Posterior vena cava (tissue), 2 donors: ENCODE measurements at regions of chr17 and their contacts with region 1.

Region 1: DNA sequence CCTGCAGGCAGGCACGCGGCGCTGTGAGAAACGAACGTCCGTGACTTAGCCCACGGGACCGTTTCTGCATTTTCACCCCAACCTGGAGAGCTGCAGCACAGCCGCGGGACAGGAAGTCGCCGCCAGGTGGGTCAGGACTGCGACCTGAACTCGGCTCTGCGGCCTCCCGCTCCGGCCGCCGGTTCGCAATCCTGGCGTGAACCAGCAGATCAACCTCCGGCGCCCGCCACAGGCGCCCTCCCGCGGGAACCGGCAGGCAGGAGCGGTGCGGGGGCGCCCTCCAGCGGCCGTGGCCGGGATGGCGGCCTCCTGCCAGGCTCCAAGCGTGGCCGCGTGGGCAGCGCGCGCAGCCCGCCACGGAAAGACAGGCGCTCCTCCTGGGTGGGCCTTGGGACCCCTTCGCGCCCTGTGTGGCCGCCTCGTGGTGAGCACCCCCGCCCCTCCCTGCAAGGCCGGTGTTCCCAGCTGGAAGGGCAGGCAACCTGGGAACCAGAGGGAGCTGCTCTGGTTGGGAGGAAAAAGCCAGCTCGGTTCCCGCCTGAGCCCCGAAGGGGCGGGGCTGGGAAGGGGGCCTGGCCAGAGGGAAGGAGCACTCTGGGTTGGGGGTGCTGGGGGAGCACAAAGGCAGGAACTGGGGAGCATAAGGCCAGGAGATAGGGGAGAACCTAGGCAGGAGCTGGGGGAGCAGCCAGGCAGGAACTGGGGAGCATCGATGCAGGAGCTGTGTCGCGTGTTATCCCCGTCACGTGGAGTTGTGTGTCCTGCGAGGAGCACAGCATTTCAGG is 28.2 kb downstream of the ACTG1 start:
- DNase-seq: peak; percentile 97

Region 2: DNA sequence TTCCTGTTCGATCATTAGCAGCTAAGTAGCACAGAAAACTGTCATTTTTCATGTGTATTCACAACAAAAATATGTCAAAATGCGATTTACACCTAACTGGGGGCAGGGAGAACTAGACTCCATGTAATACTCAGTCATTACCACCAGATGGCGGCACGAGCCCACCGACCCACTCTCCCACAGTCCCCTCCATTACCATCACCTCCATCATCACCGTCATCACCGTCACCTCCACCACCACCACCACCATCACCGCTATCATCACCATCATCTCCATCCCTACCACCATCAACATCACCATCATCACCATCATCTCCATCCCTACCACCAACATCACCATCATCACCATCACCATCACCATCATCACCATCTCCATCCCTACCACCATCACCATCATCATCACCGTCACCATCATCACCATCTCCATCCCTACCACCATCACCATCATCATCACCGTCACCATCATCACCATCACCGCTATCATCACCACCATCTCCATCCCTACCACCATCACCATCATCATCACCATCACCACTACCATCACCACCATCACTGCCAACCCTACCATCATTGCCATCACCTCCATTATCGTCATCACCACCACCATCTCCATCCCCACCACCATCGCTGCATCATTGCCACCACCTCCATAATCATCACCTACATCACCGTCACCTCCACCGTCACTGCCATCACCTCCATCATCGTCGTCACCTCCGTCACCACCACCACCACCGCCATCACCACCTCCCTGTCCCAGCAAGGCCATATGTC is 230.8 kb before region 1 on chr17:
- intact Hi-C with region 1: loop called (anchors 5 kb)
- DNase-seq: no peak

Region 3: GRCh38 chr17:81294856-81295680 is 189.3 kb before region 1 on chr17 and contains the start of gene SLC38A10:
- intact Hi-C with region 1: loop called in 1 of 2 experiments (anchors 10 kb)
- DNase-seq: peak; percentile 98
- total RNA-seq, gene SLC38A10: 59.6 to 85.1 TPM

Region 4: GRCh38 chr17:81394921-81395599 is 89.3 kb before region 1 on chr17 and contains the start of gene BAHCC1:
- intact Hi-C with region 1: loop called (anchors 5 kb)
- DNase-seq: peak; percentile 100
- total RNA-seq, gene BAHCC1: 17.3 to 19.1 TPM

Region 5: GRCh38 chr17:81401723-81402529 is 82.5 kb before region 1 on chr17:
- intact Hi-C with region 1: loop called in 1 of 2 experiments (anchors 5 kb)
- DNase-seq: no peak

Region 6: GRCh38 chr17:81494626-81495385 is 10.4 kb after region 1 on chr17:
- intact Hi-C with region 1: no loop called
- DNase-seq: no peak